Caco-2 (cell line): ENCODE measurements at regions of chr17 and their contacts with region 1.

Region 1: GRCh38 chr17:35088881-35089585 is 25.5 kb upstream of the RFFL start:
- DNase-seq: peak; percentile 85 to 94
- H3K4me3 ChIP-seq: peak overlapping the region; percentile 62
- H3K4me3 Mint-ChIP-seq: peak overlapping the region; percentile 94
- H3K27ac Mint-ChIP-seq: peak overlapping the region; percentile 92
- H3K4me1 ChIP-seq: peaks cover 18% of the 10 kb centered on the region
- H3K4me1 Mint-ChIP-seq: peaks cover 14% of the 10 kb centered on the region
- H3K27me3 ChIP-seq: no peaks in the 10 kb centered on the region
- H3K27me3 Mint-ChIP-seq: no peaks in the 10 kb centered on the region
- CTCF ChIP-seq: peak; percentile 77 to 80

Region 2: GRCh38 chr17:34998205-34998604 is 90.8 kb before region 1 on chr17:
- CTCF ChIA-PET with region 1: no interaction called
- POLR2A ChIA-PET with region 1: no interaction called
- intact Hi-C with region 1: loop called (anchors 1 kb)
- DNase-seq: peak; percentile 78 to 84
- H3K4me3 ChIP-seq: no peak overlapping the region
- H3K4me3 Mint-ChIP-seq: no peak overlapping the region
- H3K27ac Mint-ChIP-seq: no peak overlapping the region
- H3K4me1 ChIP-seq: no peaks in the 10 kb centered on the region
- H3K4me1 Mint-ChIP-seq: no peaks in the 10 kb centered on the region
- H3K27me3 ChIP-seq: no peaks in the 10 kb centered on the region
- H3K27me3 Mint-ChIP-seq: no peaks in the 10 kb centered on the region
- CTCF ChIP-seq: peak; percentile 86 to 97

Region 3: DNA sequence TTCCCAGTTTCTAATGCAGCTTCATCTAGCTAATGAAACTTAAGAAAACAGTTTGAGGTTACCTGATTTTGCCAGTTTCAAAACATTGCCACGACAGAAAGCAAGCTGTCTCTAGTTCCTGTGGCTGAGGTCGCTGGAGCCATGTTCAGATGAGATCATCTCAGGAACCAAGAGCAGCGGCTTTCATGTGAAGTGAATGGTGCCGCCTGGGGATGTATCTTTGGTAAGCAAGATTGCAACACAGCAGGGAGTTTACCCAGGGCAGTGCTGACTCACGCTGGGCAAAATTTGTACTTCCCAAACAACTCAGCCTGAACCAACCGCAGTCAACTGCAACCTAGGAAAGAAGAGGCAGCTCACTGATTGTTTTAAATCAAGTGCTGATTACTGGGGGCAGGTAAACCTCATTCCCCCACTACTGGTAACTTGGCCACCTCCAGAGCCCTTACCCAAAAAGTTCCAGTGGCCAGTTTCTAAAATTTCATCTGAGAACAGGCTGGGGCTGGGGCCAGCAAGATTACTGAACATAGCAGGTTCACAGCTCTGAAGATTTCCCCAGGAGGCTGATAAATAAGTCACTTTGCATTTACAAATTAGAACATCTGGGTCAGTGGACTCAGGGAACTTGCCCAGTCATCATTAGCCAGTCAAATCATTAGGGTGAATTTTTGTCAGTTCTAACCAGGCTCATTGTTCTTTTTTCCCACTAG is 25.4 kb before region 1 on chr17 and contains the start of gene RFFL:
- CTCF ChIA-PET with region 1: interaction called, 10 read pairs
- POLR2A ChIA-PET with region 1: no interaction called
- intact Hi-C with region 1: loop called (anchors 1 kb)
- DNase-seq: peak; percentile 91 to 94
- H3K4me3 ChIP-seq: peak within 1 kb of the TSS; percentile 1; the same call in 1 of the 2 replicates
- H3K4me3 Mint-ChIP-seq: peak within 1 kb of the TSS; percentile 49
- H3K27ac Mint-ChIP-seq: peak within 1 kb of the TSS; percentile 75
- H3K4me1 ChIP-seq: peaks cover 27% of the 10 kb centered on the region
- H3K4me1 Mint-ChIP-seq: peaks cover 21% of the 10 kb centered on the region
- H3K27me3 ChIP-seq: no peaks in the 10 kb centered on the region
- H3K27me3 Mint-ChIP-seq: no peaks in the 10 kb centered on the region
- CTCF ChIP-seq: peak; percentile 16 to 31
- total RNA-seq, gene RFFL: 27.9 and 29.6 TPM in 2 replicates

Region 4: DNA sequence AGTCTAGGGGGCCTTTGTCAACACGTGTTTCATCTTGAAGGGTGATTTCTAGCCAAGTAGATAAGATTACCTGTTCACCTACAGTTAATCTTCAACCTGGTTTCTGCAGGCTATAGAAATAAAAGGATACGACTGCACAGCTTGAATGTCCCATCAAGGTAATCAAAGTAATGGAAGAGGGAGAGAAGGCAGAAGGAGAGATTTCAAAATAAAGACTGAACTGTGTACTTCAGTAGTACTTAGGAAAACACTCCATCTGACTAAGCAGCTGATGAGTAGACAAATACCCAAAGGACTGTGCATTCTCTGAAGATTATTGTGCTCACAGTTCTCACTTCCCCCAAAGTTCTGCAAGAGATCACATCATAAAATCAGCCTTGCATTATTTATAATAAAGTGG is 19.7 kb before region 1 on chr17:
- CTCF ChIA-PET with region 1: interaction called, 10 read pairs
- POLR2A ChIA-PET with region 1: no interaction called
- intact Hi-C with region 1: loop called (anchors 1 kb)
- DNase-seq: peak in 1 of 2 experiments; percentile 32
- H3K4me3 ChIP-seq: no peak overlapping the region
- H3K4me3 Mint-ChIP-seq: peak overlapping the region; percentile 19
- H3K27ac Mint-ChIP-seq: no peak overlapping the region
- H3K4me1 ChIP-seq: peaks cover 34% of the 10 kb centered on the region
- H3K4me1 Mint-ChIP-seq: peaks cover 26% of the 10 kb centered on the region
- H3K27me3 ChIP-seq: no peaks in the 10 kb centered on the region
- H3K27me3 Mint-ChIP-seq: no peaks in the 10 kb centered on the region
- CTCF ChIP-seq: no peak

Region 5: GRCh38 chr17:35119368-35120165 is 30.5 kb after region 1 on chr17 and contains the start of gene RAD51D:
- CTCF ChIA-PET with region 1: interaction called, 12 read pairs
- POLR2A ChIA-PET with region 1: no interaction called
- intact Hi-C with region 1: loop called (anchors 2 kb)
- DNase-seq: peak; percentile 86 to 91
- H3K4me3 ChIP-seq: peak within 1 kb of the TSS; percentile 70
- H3K4me3 Mint-ChIP-seq: peak within 1 kb of the TSS; percentile 75
- H3K27ac Mint-ChIP-seq: peak within 1 kb of the TSS; percentile 40
- H3K4me1 ChIP-seq: peaks cover 5% of the 10 kb centered on the region
- H3K4me1 Mint-ChIP-seq: no peaks in the 10 kb centered on the region
- H3K27me3 ChIP-seq: no peaks in the 10 kb centered on the region
- H3K27me3 Mint-ChIP-seq: no peaks in the 10 kb centered on the region
- CTCF ChIP-seq: peak; percentile 74 to 97
- total RNA-seq, gene RAD51D: 31.8 and 31.9 TPM in 2 replicates

Region 6: GRCh38 chr17:35161281-35161761 is 72.3 kb after region 1 on chr17:
- CTCF ChIA-PET with region 1: no interaction called
- POLR2A ChIA-PET with region 1: no interaction called
- intact Hi-C with region 1: no loop called
- DNase-seq: peak in 1 of 2 experiments; percentile 2
- H3K4me3 ChIP-seq: no peak overlapping the region
- H3K4me3 Mint-ChIP-seq: no peak overlapping the region
- H3K27ac Mint-ChIP-seq: no peak overlapping the region
- H3K4me1 ChIP-seq: no peaks in the 10 kb centered on the region
- H3K4me1 Mint-ChIP-seq: peaks cover 4% of the 10 kb centered on the region
- H3K27me3 ChIP-seq: no peaks in the 10 kb centered on the region; the same call in 1 of the 2 replicates
- H3K27me3 Mint-ChIP-seq: peaks cover 20% of the 10 kb centered on the region
- CTCF ChIP-seq: no peak